Transverse colon (tissue), 4 donors: ENCODE measurements at regions of chr6 and their contacts with region 1.

Region 1: DNA sequence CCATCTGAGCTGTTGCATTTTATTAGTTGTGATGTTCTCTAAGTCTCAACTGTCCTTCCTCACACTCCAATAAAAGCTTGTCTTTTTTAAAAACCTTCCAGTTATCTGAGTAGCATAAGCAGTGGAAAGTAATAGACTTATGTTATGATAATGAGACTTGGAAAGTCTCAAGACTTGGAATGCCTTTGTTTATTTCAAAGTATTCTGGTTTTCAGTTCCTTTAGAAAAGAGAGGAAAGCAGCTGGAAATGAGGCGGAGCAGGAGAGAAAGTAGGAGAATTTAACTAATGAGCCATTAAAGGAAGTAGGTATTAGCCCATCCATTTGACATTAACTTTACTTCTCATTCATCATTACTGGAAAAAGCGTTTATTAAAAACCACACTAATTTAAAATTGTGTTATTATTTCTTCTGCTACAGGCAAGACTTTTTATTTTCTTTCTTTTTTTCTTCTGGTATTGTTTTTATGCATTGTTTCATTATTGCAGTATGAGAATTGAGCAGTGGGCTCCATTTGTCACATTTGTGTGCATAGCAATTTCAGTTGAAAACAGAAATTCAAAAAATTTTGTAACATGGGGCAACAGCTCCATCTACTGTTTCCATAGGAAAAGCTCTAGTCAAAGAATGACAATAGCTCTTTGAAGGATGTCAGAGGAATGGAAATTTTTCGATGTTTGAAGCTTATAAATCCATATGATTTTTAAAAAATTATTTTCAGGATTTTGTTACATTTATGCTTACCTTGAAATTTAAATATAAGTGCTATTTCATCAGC is 194.8 kb downstream of the COL9A1 start:
- DNase-seq: no peak
- H3K4me3 ChIP-seq: no peak overlapping the region
- H3K27ac ChIP-seq: no peak overlapping the region
- H3K4me1 ChIP-seq: peaks cover 0 to 4% (median 0%) of the 10 kb centered on the region in 4 donors
- H3K27me3 ChIP-seq: no peaks in the 10 kb centered on the region
- CTCF ChIP-seq: peak; percentile 53 to 60 (median 58)
- EP300 ChIP-seq: no peak
- POLR2A ChIP-seq: no peak

Region 2: GRCh38 chr6:68634726-68635411 is 1473.2 kb before region 1 on chr6 and contains the start of gene ADGRB3:
- in situ Hi-C with region 1: loop called in 2 of 4 experiments (anchors 25 kb)
- intact Hi-C with region 1: no loop called
- DNase-seq: peak; percentile 60
- H3K4me3 ChIP-seq: peak within 1 kb of the TSS; percentile 46 to 59 (median 52)
- H3K27ac ChIP-seq: peak within 1 kb of the TSS; percentile 64 to 78 (median 67)
- H3K4me1 ChIP-seq: peaks cover 0 to 18% (median 13%) of the 10 kb centered on the region in 4 donors
- H3K27me3 ChIP-seq: peaks cover 59% of the 10 kb centered on the region
- CTCF ChIP-seq: no peak
- EP300 ChIP-seq: no peak
- POLR2A ChIP-seq: no peak
- total RNA-seq, gene ADGRB3: 0.37 to 20.5 (median 2.2) TPM

Region 3: DNA sequence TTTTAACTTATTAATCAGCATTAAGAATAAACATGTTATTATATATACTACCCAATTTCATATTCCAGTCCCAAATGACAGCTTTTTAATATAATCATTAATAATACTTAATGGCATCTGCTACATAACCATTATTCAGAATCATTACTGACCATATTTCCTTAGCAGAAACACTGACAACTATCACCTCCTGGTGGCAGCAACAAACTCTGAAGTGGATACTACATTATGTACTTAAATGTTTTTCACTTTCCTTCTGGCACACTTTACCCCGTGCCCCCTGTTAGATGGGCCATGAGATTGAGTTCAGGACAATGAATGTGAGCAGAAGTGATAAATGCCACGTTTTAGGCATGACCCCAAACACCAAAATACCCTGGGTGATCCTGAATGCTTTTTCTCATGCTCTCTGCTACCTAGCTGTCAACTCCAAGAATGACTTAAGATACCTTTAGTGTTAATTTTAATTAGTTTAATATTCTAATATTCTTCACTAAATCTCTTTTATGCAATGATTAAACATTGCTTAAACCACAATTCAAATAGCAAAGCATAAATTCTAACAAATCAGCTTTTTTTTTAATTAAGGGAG is 388.3 kb before region 1 on chr6:
- in situ Hi-C with region 1: loop called in 1 of 4 experiments (anchors 25 kb)
- intact Hi-C with region 1: no loop called
- DNase-seq: no peak
- H3K4me3 ChIP-seq: no peak overlapping the region
- H3K27ac ChIP-seq: no peak overlapping the region
- H3K4me1 ChIP-seq: no peaks in the 10 kb centered on the region
- H3K27me3 ChIP-seq: no peaks in the 10 kb centered on the region
- CTCF ChIP-seq: peak in 2 of 5 experiments; percentile 14 to 18
- EP300 ChIP-seq: no peak
- POLR2A ChIP-seq: no peak

Region 4: GRCh38 chr6:69835414-69836179 is 272.4 kb before region 1 on chr6:
- in situ Hi-C with region 1: loop called in 3 of 4 experiments (anchors 10 to 25 kb)
- intact Hi-C with region 1: loop called (anchors 10 kb)
- DNase-seq: no peak
- H3K4me3 ChIP-seq: no peak overlapping the region
- H3K27ac ChIP-seq: no peak overlapping the region
- H3K4me1 ChIP-seq: peaks cover 0 to 4% (median 0%) of the 10 kb centered on the region in 4 donors
- H3K27me3 ChIP-seq: peaks cover 4% of the 10 kb centered on the region
- CTCF ChIP-seq: peak; percentile 52 to 71 (median 68)
- EP300 ChIP-seq: no peak
- POLR2A ChIP-seq: no peak

Region 5: DNA sequence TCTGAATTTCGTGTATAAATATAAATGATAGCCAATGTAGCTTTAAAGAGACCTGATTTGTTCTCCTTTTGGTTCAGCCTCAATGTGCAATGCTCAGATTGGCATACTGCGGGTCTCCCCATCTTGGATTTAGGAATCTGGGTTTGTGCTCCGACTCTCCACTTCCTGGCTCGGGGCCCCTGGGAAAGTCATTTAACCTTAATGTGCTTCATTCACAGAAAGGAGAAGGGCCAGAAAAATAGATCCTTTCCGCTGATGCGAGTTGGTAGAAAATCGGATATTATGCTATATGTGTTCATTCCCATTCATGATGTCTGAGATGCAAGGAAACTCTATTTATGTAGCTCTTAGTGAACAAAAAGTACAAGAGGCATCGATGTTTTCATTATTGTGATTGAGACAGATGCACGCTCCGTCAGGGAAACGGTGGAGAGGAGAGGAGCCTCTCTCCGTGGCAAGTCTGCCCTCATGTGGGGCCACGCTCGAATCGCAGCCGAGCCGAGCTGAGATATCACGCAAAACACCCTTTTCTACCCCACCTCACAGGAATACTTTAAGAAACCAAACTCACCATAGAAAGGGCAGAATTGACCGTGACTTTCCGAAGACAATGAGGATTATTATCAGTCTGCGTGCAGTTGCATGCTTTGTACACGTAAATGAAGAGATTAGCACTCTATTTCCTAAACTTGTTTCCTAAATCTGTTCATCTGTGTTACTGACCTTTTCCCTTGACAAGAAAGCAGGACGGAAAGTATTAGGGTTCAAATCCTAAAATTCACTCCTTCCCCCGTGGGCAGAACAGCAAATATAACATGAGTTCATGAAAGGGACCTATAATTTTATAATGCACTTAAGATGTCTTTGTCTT is 58.3 kb after region 1 on chr6:
- in situ Hi-C with region 1: no loop called
- intact Hi-C with region 1: no loop called
- DNase-seq: peak; percentile 29
- H3K4me3 ChIP-seq: no peak overlapping the region
- H3K27ac ChIP-seq: no peak overlapping the region
- H3K4me1 ChIP-seq: no peaks in the 10 kb centered on the region
- H3K27me3 ChIP-seq: peaks cover 28% of the 10 kb centered on the region
- CTCF ChIP-seq: peak in 3 of 5 experiments; percentile 45 to 53 (median 49)
- EP300 ChIP-seq: no peak
- POLR2A ChIP-seq: no peak

Region 6: GRCh38 chr6:70310063-70310694 is 202.1 kb after region 1 on chr6:
- in situ Hi-C with region 1: no loop called
- intact Hi-C with region 1: no loop called
- DNase-seq: no peak
- H3K4me3 ChIP-seq: no peak overlapping the region
- H3K27ac ChIP-seq: no peak overlapping the region
- H3K4me1 ChIP-seq: peaks cover 0 to 7% (median 0%) of the 10 kb centered on the region in 4 donors
- H3K27me3 ChIP-seq: no peaks in the 10 kb centered on the region
- CTCF ChIP-seq: peak; percentile 47 to 63 (median 58)
- EP300 ChIP-seq: no peak
- POLR2A ChIP-seq: no peak